Heart right ventricle (tissue), 16 donors: ENCODE measurements at regions of chr15 and their contacts with region 1.

Region 1: DNA sequence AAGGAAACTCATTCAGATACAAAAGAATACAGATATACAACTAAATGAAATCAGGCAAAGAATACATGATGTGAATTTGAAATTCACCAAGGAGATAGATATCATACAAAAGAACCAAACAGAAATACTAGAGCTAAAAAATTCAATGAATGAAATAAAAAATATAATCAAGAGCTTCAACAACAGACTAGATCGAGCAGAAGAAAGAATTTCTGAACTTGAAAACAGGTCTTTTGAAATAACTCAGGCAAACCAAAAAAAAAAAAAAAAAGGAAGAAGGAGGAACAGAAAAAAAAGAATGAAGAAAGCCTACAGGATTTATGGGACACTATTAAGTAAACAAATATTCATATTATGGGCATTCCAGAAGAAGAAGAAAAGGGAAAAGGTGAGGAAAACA is 137.8 kb downstream of the DMXL2 start:
- DNase-seq: no peak
- ATAC-seq: no peak
- H3K4me3 ChIP-seq: no peak overlapping the region
- H3K27ac ChIP-seq: no peak overlapping the region
- H3K4me1 ChIP-seq: no peaks in the 10 kb centered on the region
- H3K27me3 ChIP-seq: no peaks in the 10 kb centered on the region
- CTCF ChIP-seq: no peak

Region 2: GRCh38 chr15:51547656-51548055 is 62.9 kb after region 1 on chr15:
- intact Hi-C with region 1: loop called in 1 of 10 experiments (anchors 10 kb)
- DNase-seq: no peak
- ATAC-seq: no peak
- H3K4me3 ChIP-seq: no peak overlapping the region
- H3K27ac ChIP-seq: no peak overlapping the region
- H3K4me1 ChIP-seq: no peaks in the 10 kb centered on the region
- H3K27me3 ChIP-seq: no peaks in the 10 kb centered on the region
- CTCF ChIP-seq: no peak